SK-N-SH (cell line): ENCODE measurements at regions of chr3 and their contacts with region 1.

Region 1: DNA sequence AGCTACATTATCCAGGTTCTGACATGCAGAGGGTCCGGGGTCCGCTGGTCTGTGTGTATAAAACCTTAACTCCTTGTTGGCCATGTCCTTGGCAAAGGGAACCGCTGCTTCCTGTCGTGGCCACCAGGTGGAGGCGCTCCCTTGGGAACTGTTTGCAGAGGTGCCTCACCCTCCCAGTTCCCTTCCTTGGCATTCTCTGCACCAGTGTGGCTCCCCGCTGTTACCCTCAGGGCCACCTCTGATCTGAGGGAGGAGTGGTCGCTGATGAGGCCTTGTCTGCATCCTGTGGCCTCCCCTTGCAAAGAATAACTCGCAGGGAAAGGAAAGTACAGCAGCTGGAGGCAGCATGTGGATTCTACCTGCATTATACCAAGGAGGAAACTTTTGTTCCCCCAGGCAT is 89.6 kb downstream of the CHRD start:
- DNase-seq: peak; percentile 64
- H3K4me3 ChIP-seq: no peak overlapping the region
- H3K27ac ChIP-seq: no peak overlapping the region
- H3K4me1 ChIP-seq: peaks cover 0 to 7% of the 10 kb centered on the region in 2 experiments; a peak in 1 of 4 replicates
- H3K27me3 ChIP-seq: peaks cover 26% of the 10 kb centered on the region; the same call in 1 of the 2 replicates
- CTCF ChIP-seq: peak; percentile 68
- EP300 ChIP-seq: no peak
- RAD21 ChIP-seq: peak; percentile 73

Region 2: GRCh38 chr3:184409331-184409926 is 60.0 kb before region 1 on chr3:
- CTCF ChIA-PET with region 1: no interaction called
- POLR2A ChIA-PET with region 1: no interaction called
- DNase-seq: no peak
- H3K4me3 ChIP-seq: no peak overlapping the region
- H3K27ac ChIP-seq: no peak overlapping the region
- H3K4me1 ChIP-seq: no peaks in the 10 kb centered on the region
- H3K27me3 ChIP-seq: no peaks in the 10 kb centered on the region
- CTCF ChIP-seq: no peak
- EP300 ChIP-seq: no peak
- RAD21 ChIP-seq: no peak

Region 3: DNA sequence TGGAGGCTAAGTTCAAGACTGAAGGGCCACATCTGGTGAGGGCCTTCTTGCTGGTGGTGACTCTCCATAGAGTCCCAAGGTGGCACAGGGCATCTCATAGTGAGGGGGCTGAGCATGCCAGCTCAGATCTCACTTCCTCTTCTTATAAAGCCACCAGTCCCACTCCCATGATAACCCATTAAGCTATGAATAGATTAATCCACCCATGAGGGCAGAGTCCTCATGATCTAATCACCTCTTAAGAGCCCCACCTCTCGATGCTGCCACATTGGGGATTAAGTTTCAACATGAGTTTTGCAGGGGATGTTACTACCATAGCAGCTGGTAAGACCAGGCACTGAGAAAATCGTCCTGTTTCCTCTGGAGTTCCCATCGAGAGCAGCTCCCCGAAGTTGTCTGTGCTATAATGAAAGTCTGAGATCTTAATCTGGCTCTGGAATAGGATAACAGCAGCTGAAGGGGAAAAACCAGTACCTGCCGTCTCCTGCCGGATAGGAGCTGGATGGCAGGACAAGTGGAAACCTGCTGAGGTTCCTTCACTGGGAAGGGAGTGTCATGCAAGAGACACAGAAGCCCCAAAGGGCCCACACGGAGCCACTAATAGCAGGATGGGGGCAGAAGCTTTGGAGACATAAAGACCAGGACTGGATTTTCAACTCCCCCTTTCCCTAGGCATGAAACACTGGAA is 12.7 kb after region 1 on chr3:
- CTCF ChIA-PET with region 1: interaction called, 11 read pairs
- POLR2A ChIA-PET with region 1: no interaction called
- DNase-seq: no peak
- H3K4me3 ChIP-seq: no peak overlapping the region
- H3K27ac ChIP-seq: no peak overlapping the region
- H3K4me1 ChIP-seq: no peaks in the 10 kb centered on the region
- H3K27me3 ChIP-seq: peaks cover 28% of the 10 kb centered on the region
- CTCF ChIP-seq: no peak
- EP300 ChIP-seq: no peak
- RAD21 ChIP-seq: no peak

Region 4: GRCh38 chr3:184531626-184532280 is 62.3 kb after region 1 on chr3:
- CTCF ChIA-PET with region 1: interaction called, 28 read pairs
- POLR2A ChIA-PET with region 1: no interaction called
- DNase-seq: no peak
- H3K4me3 ChIP-seq: no peak overlapping the region
- H3K27ac ChIP-seq: no peak overlapping the region
- H3K4me1 ChIP-seq: no peaks in the 10 kb centered on the region
- H3K27me3 ChIP-seq: peaks cover 73% of the 10 kb centered on the region
- CTCF ChIP-seq: no peak
- EP300 ChIP-seq: no peak
- RAD21 ChIP-seq: no peak

Region 5: DNA sequence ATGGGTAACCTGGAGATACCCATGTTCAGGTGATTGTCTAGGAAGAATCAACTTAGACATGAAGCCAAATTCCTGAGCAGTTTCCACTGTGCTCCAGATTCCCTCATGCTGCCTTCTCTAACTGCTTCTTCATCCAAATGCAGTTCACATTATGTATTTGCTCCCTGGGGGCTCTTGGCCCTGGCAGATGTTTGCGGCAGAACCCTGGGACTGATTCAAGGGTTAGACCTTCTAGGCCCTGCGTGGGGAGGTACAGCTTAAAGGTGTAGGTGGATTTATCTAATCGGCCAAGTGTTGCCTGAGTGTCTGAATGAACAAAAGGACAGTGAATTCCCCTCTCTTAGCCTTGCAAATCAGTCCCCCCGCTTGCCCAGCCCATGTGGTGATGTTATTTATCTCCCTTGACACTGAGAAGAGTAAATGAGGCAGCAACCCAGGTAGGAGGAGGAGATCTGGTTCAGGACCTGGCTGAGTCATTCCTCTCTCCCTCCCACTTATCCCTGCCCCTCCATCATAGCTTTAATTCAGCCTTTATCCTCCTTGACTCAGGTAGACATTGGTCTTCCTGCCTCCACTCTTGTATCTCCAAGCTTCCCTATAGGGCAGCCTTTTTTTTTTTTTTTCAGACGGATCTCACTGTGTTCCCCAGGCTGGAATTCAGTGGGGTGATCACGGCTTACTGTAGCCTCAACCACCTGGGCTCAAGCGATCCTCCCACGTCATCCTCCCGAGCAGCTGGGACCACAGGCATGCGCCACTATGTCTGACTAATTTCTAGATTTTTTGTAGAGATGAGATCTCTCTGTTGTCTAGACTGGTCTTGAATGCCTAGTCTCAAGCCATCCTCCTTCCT is 187.6 kb after region 1 on chr3:
- CTCF ChIA-PET with region 1: no interaction called
- POLR2A ChIA-PET with region 1: no interaction called
- DNase-seq: no peak
- H3K4me3 ChIP-seq: no peak overlapping the region
- H3K27ac ChIP-seq: no peak overlapping the region
- H3K4me1 ChIP-seq: peaks cover 0 to 23% of the 10 kb centered on the region in 2 experiments; a peak in 1 of 4 replicates
- H3K27me3 ChIP-seq: no peaks in the 10 kb centered on the region
- CTCF ChIP-seq: no peak
- EP300 ChIP-seq: no peak
- RAD21 ChIP-seq: no peak